SK-N-SH (cell line): ENCODE measurements at regions of chr17 and their contacts with region 1.

Region 1: DNA sequence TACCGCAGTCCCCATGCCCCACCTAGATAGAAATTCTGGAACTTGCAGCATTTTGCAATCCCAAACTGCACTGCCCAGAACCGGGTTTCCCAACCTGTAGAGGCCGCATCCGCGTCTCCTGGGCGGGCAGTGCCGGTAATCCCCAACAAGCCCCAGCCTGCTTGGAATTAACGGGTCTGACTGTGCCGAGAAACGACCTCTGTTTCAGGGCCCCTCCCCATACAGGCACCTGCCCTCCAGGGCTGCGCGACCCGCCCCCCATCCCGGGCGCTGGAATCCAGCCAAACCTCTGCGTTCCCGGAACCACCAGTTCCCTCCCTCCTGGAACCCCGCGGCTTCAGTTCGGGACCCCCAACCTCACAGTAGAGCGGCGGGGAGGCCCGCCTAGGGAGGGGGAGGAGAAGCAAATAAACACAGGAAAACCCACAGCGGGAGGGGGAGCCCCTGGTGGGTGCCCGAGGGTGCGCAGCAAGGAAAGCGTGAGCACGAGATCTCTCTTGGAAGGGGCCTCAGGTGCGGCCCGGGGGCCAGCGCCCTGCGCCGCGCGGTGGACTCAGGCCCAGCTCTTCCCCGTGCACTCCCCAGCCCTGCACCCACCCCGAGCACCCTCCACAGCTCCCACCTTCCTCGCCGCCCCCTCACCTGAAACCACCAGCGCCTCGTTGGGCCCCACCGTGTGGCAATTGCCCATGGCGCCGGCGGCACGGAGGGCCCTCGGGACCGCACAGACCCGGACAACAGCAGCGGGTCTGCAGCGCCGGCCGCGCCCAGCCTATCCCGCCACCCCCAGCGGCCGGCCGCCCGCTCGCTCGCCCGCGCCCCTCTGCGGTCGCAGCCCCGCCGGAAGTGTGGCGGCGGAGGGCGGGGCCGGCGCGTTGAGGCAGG is at the start of gene FLOT2:
- DNase-seq: peak; percentile 92
- H3K4me3 ChIP-seq: peak within 1 kb of the TSS; percentile 76 to 98
- H3K27ac ChIP-seq: peak within 1 kb of the TSS; percentile 48 to 85; a peak in 3 of 4 replicates
- H3K4me1 ChIP-seq: peaks cover 18 to 22% of the 10 kb centered on the region in 2 experiments; a peak in 2 of 4 replicates
- H3K27me3 ChIP-seq: no peaks in the 10 kb centered on the region
- CTCF ChIP-seq: peak; percentile 38
- EP300 ChIP-seq: no peak
- RAD21 ChIP-seq: 0 out of 2 replicates have a peak, but pooled peaks have one; percentile 2
- polyA plus RNA-seq, gene FLOT2: 89.8 and 105 TPM in 2 replicates

Region 2: GRCh38 chr17:28750178-28751047 is 146.7 kb before region 1 on chr17:
- CTCF ChIA-PET with region 1: interaction called, 10 read pairs
- POLR2A ChIA-PET with region 1: interaction called, 5 read pairs
- DNase-seq: peak; percentile 87
- H3K4me3 ChIP-seq: peak overlapping the region in 1 of 2 experiments; percentile 33; a peak in 1 of 4 replicates
- H3K27ac ChIP-seq: peak overlapping the region; percentile 36 to 44; a peak in 2 of 4 replicates
- H3K4me1 ChIP-seq: peaks cover 22 to 32% of the 10 kb centered on the region in 2 experiments; a peak in 3 of 4 replicates
- H3K27me3 ChIP-seq: no peaks in the 10 kb centered on the region
- CTCF ChIP-seq: peak; percentile 97
- EP300 ChIP-seq: peak in 1 of 2 experiments; percentile 18; a peak in 1 of 4 replicates
- RAD21 ChIP-seq: peak; percentile 86

Region 3: DNA sequence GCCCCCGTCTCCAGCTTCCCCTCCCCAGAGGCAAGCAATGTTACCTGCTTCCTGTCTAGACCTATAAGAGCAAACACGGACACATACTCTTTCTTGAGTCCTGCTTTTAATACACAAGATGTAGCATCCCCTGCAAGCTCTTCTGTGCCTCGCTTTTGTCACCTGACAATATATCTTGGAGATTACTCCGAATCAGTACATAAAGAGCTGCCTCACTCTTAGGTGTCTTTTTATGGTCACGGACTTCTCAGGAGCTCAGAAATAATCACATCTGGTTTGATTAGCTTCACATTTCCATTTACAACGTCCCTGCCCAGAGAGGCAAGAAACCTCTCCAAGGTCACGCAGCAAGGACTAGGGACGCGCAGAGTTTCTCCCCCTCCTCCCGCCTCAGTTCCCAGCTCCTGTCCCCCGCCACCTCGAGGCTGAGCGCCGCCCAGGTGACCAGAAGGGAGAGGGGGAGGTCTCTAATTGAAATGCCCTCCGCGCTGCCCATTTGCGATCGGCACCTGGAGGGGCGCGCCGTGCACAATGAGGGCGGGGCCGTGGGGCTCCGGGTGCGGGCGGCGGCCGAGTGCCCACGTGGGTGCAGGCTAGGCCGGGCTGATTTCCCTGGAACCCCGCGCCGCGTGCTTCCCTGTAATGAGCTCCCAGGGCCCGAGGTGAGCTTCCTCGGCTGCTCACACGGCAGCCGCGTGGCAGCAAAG is 122.5 kb after region 1 on chr17:
- CTCF ChIA-PET with region 1: no interaction called
- POLR2A ChIA-PET with region 1: no interaction called
- DNase-seq: no peak
- H3K4me3 ChIP-seq: no peak overlapping the region
- H3K27ac ChIP-seq: no peak overlapping the region
- H3K4me1 ChIP-seq: peaks cover 0 to 5% of the 10 kb centered on the region in 2 experiments; a peak in 1 of 4 replicates
- H3K27me3 ChIP-seq: peaks cover 29% of the 10 kb centered on the region
- CTCF ChIP-seq: no peak
- EP300 ChIP-seq: no peak
- RAD21 ChIP-seq: no peak